OCI-LY7 (cell line): ENCODE measurements at regions of chr12 and their contacts with region 1.

Region 1: DNA sequence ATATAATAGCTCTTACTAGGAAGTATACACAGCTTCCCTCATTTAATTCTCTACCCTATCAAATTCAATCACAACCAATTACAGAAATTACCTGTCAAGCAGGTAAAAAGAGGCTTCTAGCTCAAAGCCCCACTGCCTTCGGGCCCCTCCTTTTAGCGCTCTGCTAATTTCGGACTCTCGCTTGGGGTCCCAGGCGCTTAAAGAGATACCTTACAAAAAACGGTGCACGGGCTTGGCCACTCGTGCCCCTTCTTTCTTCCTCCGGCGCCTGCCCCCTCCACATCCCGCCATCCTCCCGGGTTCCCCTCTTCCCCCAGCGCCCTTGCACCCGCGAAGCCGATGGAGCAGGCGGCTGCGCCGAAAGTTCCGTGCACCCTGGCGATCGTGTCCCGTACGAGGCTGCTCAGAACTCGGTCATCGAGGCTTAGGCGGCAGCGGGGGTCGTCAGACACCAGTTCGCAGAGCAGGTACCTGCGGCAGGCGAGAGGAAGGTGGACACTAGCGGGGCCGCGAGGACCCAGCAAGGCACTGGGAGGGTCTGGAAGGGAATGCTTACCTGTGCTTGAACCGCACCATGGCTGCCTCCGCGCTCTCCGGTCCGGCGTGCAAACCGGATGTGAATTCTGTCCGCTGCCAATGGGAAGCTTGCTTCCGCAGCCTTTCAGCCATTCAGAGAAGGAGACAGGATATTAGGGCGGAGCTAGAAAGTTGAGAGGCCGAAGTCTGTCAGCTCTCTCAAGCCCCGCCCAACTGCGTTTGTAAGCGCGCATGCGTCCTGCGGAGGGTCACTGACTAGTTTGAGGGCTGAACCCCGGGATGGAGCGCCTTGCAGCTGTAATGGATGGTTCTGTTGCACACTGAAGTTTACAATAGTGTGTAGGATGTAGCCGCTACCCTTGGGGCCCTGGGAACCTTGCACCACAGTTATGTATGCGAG is at the start of gene POP5:
- DNase-seq: peak; percentile 99
- H3K4me3 ChIP-seq: peak within 1 kb of the TSS; percentile 81
- H3K27ac ChIP-seq: peak within 1 kb of the TSS; percentile 33
- H3K4me1 ChIP-seq: peaks cover 17% of the 10 kb centered on the region
- CTCF ChIP-seq: no peak
- total RNA-seq, gene POP5: 65.8 and 73.4 TPM in 2 replicates

Region 2: DNA sequence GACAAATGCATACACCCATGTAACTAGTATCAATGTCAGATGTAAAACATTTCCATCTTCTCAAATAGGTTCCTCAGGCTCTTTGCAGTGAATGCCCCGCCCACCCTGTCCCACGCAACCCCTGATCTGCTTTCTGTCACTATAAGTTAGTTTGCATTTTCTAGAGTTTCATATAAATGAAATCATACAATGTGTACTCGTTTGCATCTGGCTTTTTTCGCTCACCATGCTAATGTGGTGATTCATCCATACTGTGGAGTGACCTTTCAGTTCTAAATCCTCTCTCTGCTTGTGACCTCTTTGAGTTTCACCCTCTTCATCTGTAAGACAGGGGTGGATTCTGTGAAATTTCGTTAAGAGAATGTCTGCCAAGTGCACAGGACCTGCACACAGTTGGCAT is 181.5 kb before region 1 on chr12:
- CTCF ChIA-PET with region 1: no interaction called
- POLR2A ChIA-PET with region 1: no interaction called
- intact Hi-C with region 1: no loop called
- DNase-seq: no peak
- H3K4me3 ChIP-seq: no peak overlapping the region
- H3K27ac ChIP-seq: no peak overlapping the region
- H3K4me1 ChIP-seq: no peaks in the 10 kb centered on the region
- CTCF ChIP-seq: no peak

Region 3: GRCh38 chr12:120640840-120641833 is 60.1 kb after region 1 on chr12:
- CTCF ChIA-PET with region 1: no interaction called
- POLR2A ChIA-PET with region 1: interaction called, 3 read pairs
- intact Hi-C with region 1: loop called (anchors 2 kb)
- DNase-seq: peak; percentile 29
- H3K4me3 ChIP-seq: peak overlapping the region; percentile 69
- H3K27ac ChIP-seq: no peak overlapping the region
- H3K4me1 ChIP-seq: peaks cover 20% of the 10 kb centered on the region
- CTCF ChIP-seq: 0 out of 2 replicates have a peak, but pooled peaks have one; percentile 20

Region 4: GRCh38 chr12:120710031-120710804 is 129.2 kb after region 1 on chr12 and contains the start of gene UNC119B:
- CTCF ChIA-PET with region 1: no interaction called
- POLR2A ChIA-PET with region 1: no interaction called
- intact Hi-C with region 1: loop called (anchors 1 kb)
- DNase-seq: peak; percentile 72
- H3K4me3 ChIP-seq: peak within 1 kb of the TSS; percentile 98
- H3K27ac ChIP-seq: peak within 1 kb of the TSS; percentile 46
- H3K4me1 ChIP-seq: peaks cover 37% of the 10 kb centered on the region
- CTCF ChIP-seq: no peak
- total RNA-seq, gene UNC119B: 16.5 and 17.2 TPM in 2 replicates

Region 5: GRCh38 chr12:120971299-120972179 is 390.5 kb after region 1 on chr12:
- CTCF ChIA-PET with region 1: interaction called, 7 read pairs
- POLR2A ChIA-PET with region 1: interaction called, 4 read pairs
- intact Hi-C with region 1: loop called (anchors 2 kb)
- DNase-seq: peak; percentile 83
- H3K4me3 ChIP-seq: no peak overlapping the region
- H3K27ac ChIP-seq: no peak overlapping the region
- H3K4me1 ChIP-seq: peaks cover 7% of the 10 kb centered on the region
- CTCF ChIP-seq: peak; percentile 95

Region 6: DNA sequence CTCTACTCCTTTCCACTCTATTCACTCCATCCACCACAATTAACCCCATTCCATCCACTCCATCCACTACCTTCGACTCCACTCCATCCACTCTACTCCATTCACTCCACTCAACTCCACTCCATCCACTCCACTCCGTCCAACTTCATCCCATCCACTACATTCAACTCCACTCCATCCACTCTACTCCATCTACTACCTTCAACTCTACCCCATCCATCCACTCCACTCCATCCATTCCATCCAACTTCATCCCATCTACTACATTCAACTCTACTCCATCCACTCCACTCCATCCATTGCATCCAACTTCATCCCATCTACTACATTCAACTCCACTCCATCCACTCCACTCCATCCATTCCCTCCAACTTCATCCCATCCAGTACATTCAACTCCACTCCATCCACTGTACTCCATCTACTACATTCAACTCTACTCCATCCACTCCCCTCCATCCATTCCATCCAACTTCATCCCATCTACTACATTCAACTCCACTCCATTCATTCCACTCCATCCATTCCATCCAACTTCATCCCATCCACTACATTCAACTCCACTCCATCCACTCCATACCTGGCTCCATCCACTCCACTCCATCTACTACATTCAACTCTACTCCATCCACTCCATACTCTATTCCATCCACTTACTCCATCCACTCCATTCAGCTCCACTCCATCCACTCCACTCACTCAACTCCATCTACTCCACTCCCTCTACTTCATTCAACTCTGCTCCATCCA is 413.7 kb after region 1 on chr12:
- CTCF ChIA-PET with region 1: no interaction called
- POLR2A ChIA-PET with region 1: no interaction called
- intact Hi-C with region 1: no loop called
- DNase-seq: no peak
- H3K4me3 ChIP-seq: no peak overlapping the region
- H3K27ac ChIP-seq: no peak overlapping the region
- H3K4me1 ChIP-seq: peaks cover 8% of the 10 kb centered on the region
- CTCF ChIP-seq: no peak